ENCODE measurements at regions of chr2 and their contacts with region 1.

Region 1: GRCh38 chr2:206556357-206556949 is 85.8 kb upstream of the FAM237A start:
- DNase-seq: no peak
- ATAC-seq: peak; percentile 47
- H3K4me3 Mint-ChIP-seq: no peak overlapping the region
- H3K27ac Mint-ChIP-seq: no peak overlapping the region
- H3K4me1 Mint-ChIP-seq: peaks cover 24% of the 10 kb centered on the region
- H3K27me3 Mint-ChIP-seq: no peaks in the 10 kb centered on the region

Region 2: GRCh38 chr2:206392118-206392517 is 164.3 kb before region 1 on chr2:
- CTCF ChIA-PET with region 1: interaction called, 4 read pairs
- POLR2A ChIA-PET with region 1: no interaction called
- intact Hi-C with region 1: loop called (anchors 1 to 2 kb)
- DNase-seq: peak; percentile 58
- ATAC-seq: peak; percentile 58
- H3K4me3 Mint-ChIP-seq: no peak overlapping the region
- H3K27ac Mint-ChIP-seq: no peak overlapping the region
- H3K4me1 Mint-ChIP-seq: no peaks in the 10 kb centered on the region
- H3K27me3 Mint-ChIP-seq: no peaks in the 10 kb centered on the region

Region 3: DNA sequence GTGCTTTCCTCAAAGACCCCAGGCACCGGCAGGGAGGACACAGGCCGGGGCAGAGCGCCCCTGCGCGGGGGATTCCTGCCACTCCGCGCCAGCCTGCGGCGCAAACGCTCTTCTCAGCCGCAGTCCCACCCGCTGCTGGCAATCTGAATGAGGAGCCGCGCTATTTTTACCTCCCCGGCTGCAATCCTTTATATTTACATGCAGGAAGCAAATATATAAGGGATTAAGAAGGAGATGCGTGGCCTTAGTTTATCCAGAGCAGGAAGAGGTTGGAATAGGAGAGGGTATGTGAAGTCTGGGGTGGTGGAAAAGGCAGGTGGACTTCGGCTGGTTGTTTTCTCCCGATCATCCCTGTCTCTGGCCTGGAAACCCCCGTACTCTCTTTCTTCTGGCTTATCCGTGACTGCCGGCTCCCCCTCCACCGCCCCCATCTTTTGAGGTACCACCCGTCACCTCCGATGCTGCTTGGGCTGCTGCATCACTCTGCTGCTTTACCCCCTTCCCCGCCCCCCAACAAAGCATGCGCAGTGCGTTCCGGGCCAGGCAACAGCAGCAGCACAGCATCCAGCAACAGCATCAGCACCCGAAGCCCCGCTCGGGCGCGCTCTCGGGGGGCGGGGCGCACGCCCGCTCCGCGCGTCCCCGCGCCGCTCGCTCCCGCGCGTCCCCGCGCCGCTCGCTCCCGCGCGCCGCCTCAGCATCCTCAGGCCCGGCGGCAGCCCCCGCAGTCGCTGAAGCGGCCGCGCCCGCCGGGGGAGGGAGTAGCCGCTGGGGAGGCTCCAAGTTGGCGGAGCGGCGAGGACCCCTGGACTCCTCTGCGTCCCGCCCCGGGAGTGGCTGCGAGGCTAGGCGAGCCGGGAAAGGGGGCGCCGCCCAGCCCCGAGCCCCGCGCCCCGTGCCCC is 113.4 kb before region 1 on chr2 and contains the start of gene ADAM23:
- CTCF ChIA-PET with region 1: no interaction called
- POLR2A ChIA-PET with region 1: no interaction called
- intact Hi-C with region 1: loop called in 1 of 2 experiments (anchors 5 kb)
- DNase-seq: peak; percentile 78
- ATAC-seq: peak; percentile 84
- H3K4me3 Mint-ChIP-seq: peak within 1 kb of the TSS; percentile 77
- H3K27ac Mint-ChIP-seq: no peak within 1 kb of the TSS
- H3K4me1 Mint-ChIP-seq: peaks cover 13% of the 10 kb centered on the region
- H3K27me3 Mint-ChIP-seq: peaks cover 57% of the 10 kb centered on the region
- total RNA-seq, gene ADAM23: 1.1 to 1.3 TPM

Region 4: GRCh38 chr2:206494061-206494460 is 62.4 kb before region 1 on chr2:
- CTCF ChIA-PET with region 1: no interaction called
- POLR2A ChIA-PET with region 1: no interaction called
- intact Hi-C with region 1: no loop called
- DNase-seq: no peak
- ATAC-seq: no peak
- H3K4me3 Mint-ChIP-seq: no peak overlapping the region
- H3K27ac Mint-ChIP-seq: no peak overlapping the region
- H3K4me1 Mint-ChIP-seq: peaks cover under 1% of the 10 kb centered on the region
- H3K27me3 Mint-ChIP-seq: peaks cover 7% of the 10 kb centered on the region

Region 5: GRCh38 chr2:206783718-206784117 is 227.3 kb after region 1 on chr2:
- CTCF ChIA-PET with region 1: interaction called, 3 read pairs
- POLR2A ChIA-PET with region 1: no interaction called
- intact Hi-C with region 1: loop called in 1 of 2 experiments (anchors 2 kb)
- DNase-seq: no peak
- ATAC-seq: no peak
- H3K4me3 Mint-ChIP-seq: no peak overlapping the region
- H3K27ac Mint-ChIP-seq: no peak overlapping the region
- H3K4me1 Mint-ChIP-seq: peaks cover 30% of the 10 kb centered on the region
- H3K27me3 Mint-ChIP-seq: no peaks in the 10 kb centered on the region